ENCODE measurements at regions of chr15 and their contacts with region 1.

Region 1: GRCh38 chr15:32824777-32825176 is 107.0 kb downstream of the GREM1 start:
- DNase-seq: peak; percentile 61
- H3K4me3 ChIP-seq: no peak overlapping the region
- H3K27ac ChIP-seq: peak overlapping the region; percentile 88
- H3K4me1 ChIP-seq: peaks cover 30% of the 10 kb centered on the region
- H3K27me3 ChIP-seq: no peaks in the 10 kb centered on the region
- CTCF ChIP-seq: no peak
- POLR2A ChIP-seq: no peak

Region 2: DNA sequence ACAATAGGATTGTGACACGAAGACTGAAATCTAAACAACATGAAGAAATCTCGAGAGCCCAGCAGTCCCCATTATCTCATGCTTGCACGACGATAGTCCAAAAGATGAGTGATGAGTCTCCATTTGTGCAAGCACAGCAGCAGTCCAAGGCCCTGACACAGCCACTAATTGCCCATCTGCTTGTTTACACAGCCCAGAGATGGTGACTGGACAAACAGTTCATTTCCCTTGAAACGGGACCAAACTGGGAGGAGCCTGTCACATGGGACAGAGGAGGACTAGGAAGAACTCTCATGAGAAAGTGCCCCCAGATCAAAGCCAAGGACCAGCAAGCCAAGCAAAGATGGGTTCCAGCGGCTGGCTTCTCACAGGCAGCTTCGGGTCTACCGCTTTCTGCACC is 14.0 kb after region 1 on chr15:
- CTCF ChIA-PET with region 1: interaction called, 15 read pairs
- POLR2A ChIA-PET with region 1: no interaction called
- dilution Hi-C with region 1: no loop called
- intact Hi-C with region 1: no loop called
- DNase-seq: peak; percentile 57
- H3K4me3 ChIP-seq: no peak overlapping the region
- H3K27ac ChIP-seq: no peak overlapping the region
- H3K4me1 ChIP-seq: peaks cover 14% of the 10 kb centered on the region
- H3K27me3 ChIP-seq: no peaks in the 10 kb centered on the region
- CTCF ChIP-seq: no peak
- POLR2A ChIP-seq: no peak

Measured in endothelial cell of umbilical vein (primary cell).